RWPE1 (cell line): ENCODE measurements at regions of chr21 and their contacts with region 1.

Region 1: GRCh38 chr21:41068967-41069642 is 98.9 kb upstream of the BACE2 start:
- DNase-seq: peak; percentile 74
- H3K27ac ChIP-seq: no peak overlapping the region
- CTCF ChIP-seq: peak; percentile 88

Region 2: GRCh38 chr21:40041446-40041845 is 1027.7 kb before region 1 on chr21:
- CTCF ChIA-PET with region 1: interaction called, 12 read pairs
- POLR2A ChIA-PET with region 1: no interaction called
- DNase-seq: no peak
- H3K27ac ChIP-seq: no peak overlapping the region
- CTCF ChIP-seq: no peak

Region 3: GRCh38 chr21:40466893-40467501 is 602.1 kb before region 1 on chr21:
- CTCF ChIA-PET with region 1: interaction called, 22 read pairs
- POLR2A ChIA-PET with region 1: no interaction called
- DNase-seq: no peak
- H3K27ac ChIP-seq: no peak overlapping the region
- CTCF ChIP-seq: peak; percentile 36

Region 4: DNA sequence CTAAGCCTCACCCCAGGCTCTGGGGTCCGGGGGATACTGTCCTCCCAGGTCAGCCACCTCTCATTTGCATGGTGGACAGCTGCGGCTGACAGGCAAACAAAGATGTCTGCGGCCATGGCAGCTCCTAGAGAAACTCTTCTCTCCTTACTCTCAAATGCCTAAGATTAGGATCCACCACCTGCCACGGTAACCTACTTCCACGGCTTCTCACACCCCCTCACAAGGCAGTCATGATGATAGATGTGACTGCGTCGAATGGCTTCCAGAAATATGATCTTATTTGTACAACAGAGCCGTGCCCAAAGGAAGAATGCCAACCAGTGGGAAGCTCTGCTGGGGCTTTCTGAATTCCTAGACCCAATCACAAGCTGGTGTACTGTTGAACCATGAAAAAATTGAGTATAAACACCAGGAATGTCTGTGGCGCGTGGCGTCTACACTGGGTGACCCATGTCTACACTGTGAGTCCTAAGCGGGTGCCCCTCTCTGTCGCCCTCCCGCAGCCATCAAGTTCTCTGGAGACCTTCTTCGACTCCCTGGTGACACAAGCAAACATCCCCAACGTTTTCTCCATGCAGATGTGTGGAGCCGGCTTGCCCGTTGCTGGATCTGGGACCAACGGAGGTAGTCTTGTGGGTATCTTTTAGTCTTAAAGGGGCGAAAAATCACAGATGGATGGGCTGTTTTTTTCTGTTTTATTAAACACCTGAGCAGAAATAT is 172.4 kb after region 1 on chr21:
- CTCF ChIA-PET with region 1: no interaction called
- POLR2A ChIA-PET with region 1: no interaction called
- DNase-seq: no peak
- H3K27ac ChIP-seq: no peak overlapping the region
- CTCF ChIP-seq: no peak